IMR-90 (cell line): ENCODE measurements at regions of chr11 and their contacts with region 1.

Region 1: GRCh38 chr11:60831143-60831500 is 10.8 kb upstream of the CCDC86 start:
- DNase-seq: peak; percentile 68
- ATAC-seq: peak; percentile 97
- H3K4me3 ChIP-seq: no peak overlapping the region
- H3K27ac ChIP-seq: no peak overlapping the region
- H3K4me1 ChIP-seq: no peaks in the 10 kb centered on the region
- H3K27me3 ChIP-seq: peaks cover 36% of the 10 kb centered on the region
- CTCF ChIP-seq: peak; percentile 94
- POLR2A ChIP-seq: 0 out of 2 replicates have a peak, but pooled peaks have one; percentile 28
- RAD21 ChIP-seq: peak; percentile 96

Region 2: DNA sequence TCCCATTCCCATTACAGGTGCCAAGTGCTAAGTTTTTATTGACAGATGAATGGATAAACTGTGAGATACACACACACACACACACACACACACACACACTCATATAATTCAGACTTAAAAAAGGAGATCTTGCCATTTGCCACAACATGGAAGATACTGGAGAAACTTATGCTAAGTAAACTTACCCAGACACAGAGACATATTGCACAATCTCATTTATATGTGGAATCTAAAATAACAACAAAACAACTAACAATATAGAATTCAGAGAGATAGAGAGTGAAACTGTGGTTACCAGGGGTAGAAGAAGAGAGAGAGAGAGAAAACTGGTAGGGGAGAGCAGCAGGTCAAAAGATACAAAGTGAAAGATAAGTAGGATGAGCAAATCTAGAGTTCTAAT is 502.7 kb before region 1 on chr11:
- CTCF ChIA-PET with region 1: no interaction called
- POLR2A ChIA-PET with region 1: no interaction called
- dilution Hi-C with region 1: no loop called
- in situ Hi-C with region 1: no loop called
- intact Hi-C with region 1: no loop called
- DNase-seq: no peak
- ATAC-seq: no peak
- H3K4me3 ChIP-seq: no peak overlapping the region
- H3K27ac ChIP-seq: no peak overlapping the region
- H3K4me1 ChIP-seq: no peaks in the 10 kb centered on the region
- H3K27me3 ChIP-seq: no peaks in the 10 kb centered on the region
- CTCF ChIP-seq: no peak
- POLR2A ChIP-seq: no peak
- RAD21 ChIP-seq: no peak

Region 3: DNA sequence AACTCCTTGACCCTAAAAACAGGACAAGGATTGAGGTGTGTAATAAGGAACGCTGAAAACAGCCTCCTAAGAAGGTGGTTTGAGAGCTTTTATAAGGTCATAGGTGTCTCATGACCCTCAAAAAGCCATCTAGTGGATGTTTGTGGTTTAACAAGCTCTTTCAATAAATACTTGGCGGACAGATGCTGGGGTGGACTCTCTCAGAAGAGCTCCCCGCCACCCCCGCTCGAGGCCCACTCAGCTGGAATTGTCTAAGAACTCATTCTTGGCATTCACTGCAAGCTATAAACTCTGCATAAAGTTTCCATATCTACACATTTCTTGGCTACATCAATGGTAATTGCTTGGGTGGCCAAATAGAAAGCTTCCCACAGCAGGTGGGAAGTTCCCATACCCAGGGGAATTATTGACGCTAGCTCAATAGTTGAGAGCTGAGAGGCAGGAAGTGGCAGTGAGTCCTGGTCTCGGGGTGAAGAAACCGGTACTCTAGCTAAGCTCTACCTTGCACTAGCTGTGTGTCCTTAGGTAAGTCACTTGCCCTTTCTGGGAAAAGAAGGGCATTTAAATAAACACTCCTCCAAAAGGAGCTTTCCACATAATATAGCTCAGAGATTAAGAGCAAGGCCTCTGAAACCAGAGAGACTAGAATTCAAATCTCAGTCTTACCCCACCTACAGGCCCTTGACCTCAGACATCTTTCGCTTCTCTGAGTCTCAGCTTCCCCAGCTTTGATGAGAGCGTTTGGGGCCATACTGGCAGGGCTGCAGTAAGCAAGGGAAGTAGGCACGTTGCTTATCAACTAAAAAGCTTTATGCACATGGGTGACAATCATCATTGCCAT is 68.1 kb before region 1 on chr11:
- CTCF ChIA-PET with region 1: no interaction called
- POLR2A ChIA-PET with region 1: no interaction called
- dilution Hi-C with region 1: no loop called
- in situ Hi-C with region 1: no loop called
- intact Hi-C with region 1: no loop called
- DNase-seq: no peak
- ATAC-seq: no peak
- H3K4me3 ChIP-seq: no peak overlapping the region
- H3K27ac ChIP-seq: no peak overlapping the region
- H3K4me1 ChIP-seq: no peaks in the 10 kb centered on the region
- H3K27me3 ChIP-seq: peaks cover 8% of the 10 kb centered on the region
- CTCF ChIP-seq: peak; percentile 11; the same call in 1 of the 2 replicates
- POLR2A ChIP-seq: no peak
- RAD21 ChIP-seq: no peak

Region 4: DNA sequence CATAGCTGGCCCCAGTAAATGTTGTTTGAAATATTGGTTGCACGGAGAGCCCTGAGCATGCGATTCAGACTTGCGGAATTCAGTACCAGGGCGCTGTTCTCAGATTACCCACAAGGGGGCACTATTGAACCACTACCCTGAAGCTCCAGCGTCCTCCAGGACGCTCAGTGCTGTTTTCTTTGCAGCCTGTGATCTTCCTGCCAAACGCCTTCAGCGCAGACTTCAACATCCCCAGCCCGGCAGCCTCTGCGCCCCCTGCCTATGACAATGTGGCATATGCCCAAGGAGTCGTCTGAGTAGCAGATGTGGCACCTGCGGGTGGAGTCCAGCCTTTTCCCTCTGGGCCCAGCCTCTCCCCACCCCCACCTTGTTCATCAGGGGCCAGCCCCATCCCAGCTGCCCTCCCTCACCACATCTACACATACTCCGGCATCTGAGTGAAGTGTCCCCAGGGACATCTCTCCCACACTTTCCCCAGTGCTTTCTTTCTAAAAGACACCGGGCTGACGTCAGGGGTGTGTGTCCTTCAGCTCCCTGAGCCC is 55.6 kb before region 1 on chr11:
- CTCF ChIA-PET with region 1: interaction called, 9 read pairs
- POLR2A ChIA-PET with region 1: no interaction called
- dilution Hi-C with region 1: no loop called
- in situ Hi-C with region 1: no loop called
- intact Hi-C with region 1: loop called (anchors 1 kb)
- DNase-seq: peak; percentile 86
- ATAC-seq: peak; percentile 97
- H3K4me3 ChIP-seq: no peak overlapping the region
- H3K27ac ChIP-seq: no peak overlapping the region
- H3K4me1 ChIP-seq: no peaks in the 10 kb centered on the region; the same call in 1 of the 2 replicates
- H3K27me3 ChIP-seq: peaks cover 7% of the 10 kb centered on the region
- CTCF ChIP-seq: peak; percentile 93
- POLR2A ChIP-seq: no peak
- RAD21 ChIP-seq: peak; percentile 87

Region 5: GRCh38 chr11:60899046-60899936 is 68.2 kb after region 1 on chr11:
- CTCF ChIA-PET with region 1: interaction called, 24 read pairs
- POLR2A ChIA-PET with region 1: no interaction called
- dilution Hi-C with region 1: no loop called
- in situ Hi-C with region 1: loop called (anchors 5 kb)
- intact Hi-C with region 1: loop called (anchors 1 kb)
- DNase-seq: peak; percentile 73
- ATAC-seq: peak; percentile 99
- H3K4me3 ChIP-seq: no peak overlapping the region
- H3K27ac ChIP-seq: no peak overlapping the region
- H3K4me1 ChIP-seq: no peaks in the 10 kb centered on the region
- H3K27me3 ChIP-seq: no peaks in the 10 kb centered on the region
- CTCF ChIP-seq: peak; percentile 93
- POLR2A ChIP-seq: no peak
- RAD21 ChIP-seq: peak; percentile 76

Region 6: DNA sequence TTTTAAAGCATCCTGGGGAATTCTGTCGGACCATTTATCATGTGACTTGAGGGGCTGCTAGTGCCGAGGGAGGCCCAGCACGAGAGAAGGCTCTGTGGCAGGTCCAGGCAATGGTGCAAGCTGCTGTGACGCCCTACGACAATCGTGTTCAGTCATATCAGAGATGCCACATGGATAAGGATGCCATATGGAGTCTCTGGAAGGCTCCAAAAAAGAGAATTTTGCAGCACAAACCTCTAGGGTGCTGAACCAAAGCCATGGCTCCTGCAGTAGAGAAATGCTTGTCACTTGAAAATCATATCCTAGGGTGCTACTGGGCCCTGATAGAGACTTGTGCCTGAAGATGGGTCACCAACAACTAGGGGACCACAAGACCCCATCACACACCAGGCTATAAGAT is 133.7 kb after region 1 on chr11:
- CTCF ChIA-PET with region 1: no interaction called
- POLR2A ChIA-PET with region 1: no interaction called
- dilution Hi-C with region 1: no loop called
- in situ Hi-C with region 1: no loop called
- intact Hi-C with region 1: loop called (anchors 5 kb)
- DNase-seq: no peak
- ATAC-seq: no peak
- H3K4me3 ChIP-seq: no peak overlapping the region
- H3K27ac ChIP-seq: no peak overlapping the region
- H3K4me1 ChIP-seq: no peaks in the 10 kb centered on the region
- H3K27me3 ChIP-seq: peaks cover 42% of the 10 kb centered on the region
- CTCF ChIP-seq: no peak
- POLR2A ChIP-seq: no peak
- RAD21 ChIP-seq: no peak

Region 7: DNA sequence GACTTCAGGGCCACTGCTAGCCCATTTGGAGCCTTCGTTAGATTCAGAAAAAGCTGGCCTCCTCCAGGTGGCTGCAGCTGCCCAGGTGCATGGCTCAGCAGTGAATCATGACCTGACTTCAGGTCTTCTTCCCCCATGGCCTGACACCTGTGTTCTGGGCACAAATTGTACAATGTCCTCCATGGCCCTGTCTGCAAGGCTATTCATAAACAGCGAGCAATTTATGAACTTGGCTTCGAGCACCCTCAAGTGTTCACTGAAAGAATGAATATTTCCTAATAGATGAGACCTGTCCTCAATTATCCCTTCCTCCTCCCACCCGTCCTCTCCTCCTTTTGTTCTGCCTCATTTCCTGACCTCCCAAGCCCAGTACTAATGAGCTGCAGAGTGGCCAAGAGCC is 342.3 kb after region 1 on chr11:
- CTCF ChIA-PET with region 1: interaction called, 5 read pairs
- POLR2A ChIA-PET with region 1: no interaction called
- dilution Hi-C with region 1: no loop called
- in situ Hi-C with region 1: no loop called
- intact Hi-C with region 1: loop called (anchors 5 kb)
- DNase-seq: peak; percentile 34
- ATAC-seq: peak; percentile 49
- H3K4me3 ChIP-seq: no peak overlapping the region
- H3K27ac ChIP-seq: no peak overlapping the region
- H3K4me1 ChIP-seq: no peaks in the 10 kb centered on the region
- H3K27me3 ChIP-seq: peaks cover 59% of the 10 kb centered on the region
- CTCF ChIP-seq: peak; percentile 53
- POLR2A ChIP-seq: no peak
- RAD21 ChIP-seq: peak; percentile 57